ENCODE measurements at regions of chr20 and their contacts with region 1.

Region 1: DNA sequence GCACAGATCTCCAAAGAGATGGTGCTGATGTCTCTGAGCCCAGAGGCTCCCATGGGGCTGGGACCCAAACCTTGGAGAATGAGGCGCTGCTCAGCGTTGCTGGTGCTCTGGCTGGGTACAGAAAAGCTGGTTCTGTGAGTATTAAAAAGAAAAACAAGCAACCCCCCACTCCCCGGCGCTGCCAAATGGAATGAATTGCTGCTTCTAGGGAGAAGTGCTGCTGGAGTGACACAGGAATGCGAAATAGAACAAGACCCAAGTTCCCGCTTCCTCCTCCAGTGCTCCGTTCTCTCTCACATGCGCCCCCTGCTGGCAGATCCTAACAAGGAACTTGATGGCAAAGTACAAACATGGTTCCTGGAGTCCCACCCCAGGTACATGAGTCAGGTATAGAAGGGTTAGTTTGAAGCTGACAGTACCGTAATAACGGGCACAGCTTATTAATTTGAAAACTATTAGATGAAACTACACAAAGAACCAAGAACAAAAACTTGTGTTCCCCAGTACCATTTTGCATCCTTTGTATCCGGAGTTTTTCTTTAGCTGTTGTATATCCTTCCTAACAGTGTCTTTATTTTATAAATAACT is 2.1 kb upstream of the DDX27 start:
- DNase-seq: peak; percentile 77

Region 2: DNA sequence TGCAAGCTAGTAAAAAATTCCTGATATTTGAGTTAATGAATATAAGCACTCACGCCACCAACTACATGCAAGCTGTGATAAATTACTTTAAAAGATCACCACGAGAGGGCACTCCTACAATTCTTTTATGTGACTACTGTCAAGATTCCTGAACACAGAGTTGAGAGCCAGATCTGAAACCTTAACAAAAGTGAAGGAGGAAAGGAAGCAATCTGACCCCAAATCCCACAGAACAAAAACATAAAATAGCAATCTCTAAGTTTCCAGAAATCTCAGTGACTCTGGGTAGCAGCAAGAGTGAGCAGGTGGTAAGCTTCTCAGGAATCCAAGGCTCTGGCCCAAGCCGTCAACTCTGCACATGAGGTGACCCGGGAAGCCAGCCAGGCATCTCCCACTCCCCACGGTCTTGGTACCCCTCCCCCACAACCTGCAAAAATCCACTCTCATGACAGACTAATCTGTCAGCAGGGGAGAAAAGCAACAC is 84.0 kb before region 1 on chr20:
- CTCF ChIA-PET with region 1: interaction called, 25 read pairs
- POLR2A ChIA-PET with region 1: interaction called, 10 read pairs
- DNase-seq: peak; percentile 55